GM18951 (cell line): ENCODE measurements at regions of chr12 and their contacts with region 1.

Region 1: GRCh38 chr12:32679091-32679919 is at the start of gene DNM1L:
- POLR2A ChIP-seq: peak; percentile 96

Region 2: DNA sequence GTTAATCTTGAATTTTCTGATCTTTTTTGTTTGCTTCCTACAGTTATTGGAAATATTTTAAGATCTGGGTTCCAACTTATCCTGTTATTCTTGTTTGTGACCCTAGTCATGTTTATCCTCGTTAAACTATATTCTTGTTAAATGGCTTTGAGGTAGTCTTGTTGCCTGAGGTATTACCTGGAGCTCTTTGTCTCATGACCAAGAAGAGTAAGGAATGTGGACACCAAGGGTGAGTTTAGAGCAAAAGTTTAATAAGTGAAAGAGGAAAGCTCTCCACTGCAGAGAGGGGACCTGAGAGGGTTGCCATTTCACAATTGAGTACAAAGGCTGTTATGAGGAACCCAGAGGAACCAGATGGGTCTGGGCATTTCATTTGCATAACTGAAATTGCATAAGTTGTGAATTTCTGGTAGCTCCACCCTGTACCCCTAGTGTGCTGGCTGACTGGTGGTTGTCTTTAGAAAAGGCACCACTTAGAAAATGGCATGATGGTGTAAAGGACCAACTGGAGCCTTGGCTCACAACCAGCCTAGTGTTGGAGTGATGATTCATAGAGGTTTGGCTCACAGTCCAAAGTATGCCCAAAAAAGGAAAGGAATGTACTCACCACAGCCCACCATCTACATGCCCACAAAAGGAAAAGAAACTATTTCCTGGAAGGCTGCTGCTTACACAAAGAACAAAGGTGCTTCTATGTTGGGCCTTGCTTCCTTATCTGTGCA is 756.8 kb before region 1 on chr12:
- in situ Hi-C with region 1: loop called (anchors 25 kb)
- POLR2A ChIP-seq: no peak

Region 3: DNA sequence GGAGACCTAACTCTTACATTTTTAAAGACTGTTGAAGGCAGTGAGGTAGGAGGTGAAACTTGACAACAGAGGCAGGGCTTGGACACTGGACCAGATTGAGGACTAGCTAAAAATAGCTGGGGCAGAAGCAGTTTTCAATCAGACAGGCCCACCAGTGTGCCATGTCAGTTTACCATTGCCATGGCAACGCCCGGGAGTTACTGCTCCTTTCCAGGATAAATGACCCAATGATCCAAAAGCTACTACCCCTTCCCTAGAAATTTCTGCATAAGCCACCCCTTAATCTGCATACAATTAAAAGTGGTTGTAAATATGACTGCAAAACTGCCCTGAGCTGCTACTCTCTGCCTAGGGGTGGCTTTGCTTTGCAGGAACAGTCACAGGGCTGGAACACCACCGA is 270.5 kb after region 1 on chr12:
- in situ Hi-C with region 1: no loop called
- POLR2A ChIP-seq: no peak